ENCODE measurements at regions of chr4 and their contacts with region 1.

Region 1: DNA sequence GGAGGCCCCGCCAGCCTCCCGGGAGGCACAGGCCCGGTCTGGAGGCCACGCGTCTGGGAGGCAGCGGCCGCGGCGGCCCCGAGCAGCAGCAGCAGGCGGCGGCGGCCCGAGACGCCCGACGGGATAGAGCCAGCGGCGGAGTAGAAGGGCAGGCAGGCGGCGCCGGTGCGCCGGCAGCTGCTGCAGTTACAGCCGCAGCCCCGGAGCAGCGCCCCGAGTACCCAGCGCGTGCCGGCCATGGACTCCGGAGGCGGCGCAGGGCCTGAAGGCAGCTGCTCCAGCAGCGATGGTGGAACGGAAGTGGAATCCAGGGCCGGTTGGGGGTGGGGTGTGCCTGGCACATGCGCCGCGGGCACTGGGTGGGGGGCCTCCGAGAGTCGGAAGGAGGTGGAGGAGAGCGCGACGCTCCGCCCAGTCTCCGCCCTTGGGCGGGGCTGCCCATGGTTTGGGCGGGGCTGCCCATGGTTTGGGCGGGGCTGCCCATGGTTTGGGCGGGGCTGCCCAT is at the start of gene GRSF1:
- DNase-seq: peak; percentile 89
- H3K4me3 Mint-ChIP-seq: peak within 1 kb of the TSS; percentile 99
- H3K27ac Mint-ChIP-seq: peak within 1 kb of the TSS; percentile 100
- H3K4me1 Mint-ChIP-seq: peaks cover 20% of the 10 kb centered on the region
- H3K27me3 Mint-ChIP-seq: no peaks in the 10 kb centered on the region
- total RNA-seq, gene GRSF1: 124 and 133 TPM in 2 replicates

Region 2: GRCh38 chr4:70704331-70705145 is 135.1 kb before region 1 on chr4:
- intact Hi-C with region 1: loop called (anchors 1 kb)
- DNase-seq: peak; percentile 38
- H3K4me3 Mint-ChIP-seq: peak overlapping the region; percentile 76
- H3K27ac Mint-ChIP-seq: peak overlapping the region; percentile 83
- H3K4me1 Mint-ChIP-seq: peaks cover 24% of the 10 kb centered on the region
- H3K27me3 Mint-ChIP-seq: peaks cover 3% of the 10 kb centered on the region

Region 3: GRCh38 chr4:70863099-70863790 is 23.6 kb after region 1 on chr4:
- intact Hi-C with region 1: loop called (anchors 1 kb)
- DNase-seq: peak; percentile 21
- H3K4me3 Mint-ChIP-seq: peak overlapping the region; percentile 15
- H3K27ac Mint-ChIP-seq: peak overlapping the region; percentile 82
- H3K4me1 Mint-ChIP-seq: peaks cover 15% of the 10 kb centered on the region
- H3K27me3 Mint-ChIP-seq: peaks cover under 1% of the 10 kb centered on the region

Region 4: GRCh38 chr4:70927502-70928137 is 88.0 kb after region 1 on chr4:
- intact Hi-C with region 1: loop called (anchors 2 kb)
- DNase-seq: peak; percentile 15
- H3K4me3 Mint-ChIP-seq: peak overlapping the region; percentile 11
- H3K27ac Mint-ChIP-seq: peak overlapping the region; percentile 76
- H3K4me1 Mint-ChIP-seq: peaks cover 31% of the 10 kb centered on the region
- H3K27me3 Mint-ChIP-seq: no peaks in the 10 kb centered on the region

Region 5: GRCh38 chr4:71004281-71004851 is 164.7 kb after region 1 on chr4:
- intact Hi-C with region 1: loop called (anchors 1 kb)
- DNase-seq: peak; percentile 54
- H3K4me3 Mint-ChIP-seq: peak overlapping the region; percentile 76
- H3K27ac Mint-ChIP-seq: peak overlapping the region; percentile 81
- H3K4me1 Mint-ChIP-seq: peaks cover 90% of the 10 kb centered on the region
- H3K27me3 Mint-ChIP-seq: no peaks in the 10 kb centered on the region